OCI-LY7 (cell line): ENCODE measurements at regions of chr6 and their contacts with region 1.

Region 1: GRCh38 chr6:47357827-47358226 is 48.1 kb upstream of the TNFRSF21 start:
- DNase-seq: peak; percentile 59
- H3K4me3 ChIP-seq: peak overlapping the region; percentile 7
- H3K27ac ChIP-seq: peak overlapping the region; percentile 98
- H3K4me1 ChIP-seq: peaks cover 78% of the 10 kb centered on the region
- CTCF ChIP-seq: no peak

Region 2: GRCh38 chr6:46637145-46637544 is 720.7 kb before region 1 on chr6:
- CTCF ChIA-PET with region 1: no interaction called
- POLR2A ChIA-PET with region 1: no interaction called
- intact Hi-C with region 1: loop called (anchors 10 kb)
- DNase-seq: peak; percentile 78
- H3K4me3 ChIP-seq: peak overlapping the region; percentile 66
- H3K27ac ChIP-seq: peak overlapping the region; percentile 97
- H3K4me1 ChIP-seq: peaks cover 98% of the 10 kb centered on the region
- CTCF ChIP-seq: no peak

Region 3: DNA sequence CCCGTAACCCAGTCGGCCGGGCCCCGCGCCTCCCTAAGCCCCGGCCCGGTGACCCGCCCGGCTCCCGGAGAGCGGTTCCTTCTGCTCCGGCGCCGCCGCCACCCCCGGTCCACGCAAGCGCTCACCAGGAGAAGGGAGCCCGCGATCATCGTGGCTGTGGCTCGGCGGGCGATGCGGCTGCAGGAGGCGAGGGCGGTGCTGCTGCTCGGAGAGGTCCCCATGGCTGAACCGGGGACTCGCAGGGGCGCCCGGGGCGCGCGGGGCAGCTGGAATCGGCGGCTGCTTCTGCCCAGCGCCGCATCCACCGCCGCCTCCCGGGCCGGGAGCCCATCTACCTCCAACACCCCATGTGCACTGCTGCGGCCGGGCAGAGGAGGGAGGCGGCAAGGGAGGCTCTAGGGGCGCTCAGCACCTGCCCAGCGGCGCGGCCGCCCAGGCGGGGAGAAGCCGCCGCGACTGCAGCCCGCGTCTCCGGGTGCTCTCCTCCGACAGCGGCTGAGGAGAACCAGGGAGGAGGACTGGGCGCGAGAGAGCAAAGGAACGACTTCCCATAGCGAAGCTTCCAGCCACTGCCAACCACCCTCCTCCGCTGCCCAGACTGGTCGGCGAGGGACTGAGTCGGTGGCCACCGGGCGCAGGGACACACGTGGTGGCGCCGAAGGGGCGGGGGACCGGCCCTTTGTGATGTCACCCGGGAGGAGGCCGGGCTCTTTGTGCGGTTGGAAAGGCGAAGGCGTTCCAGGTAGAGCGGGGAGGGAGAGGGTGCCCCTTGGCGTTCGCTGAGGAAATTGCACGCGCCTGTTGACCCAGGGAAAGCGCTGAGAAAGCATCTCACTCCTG is 48.3 kb before region 1 on chr6 and contains the start of gene TNFRSF21:
- CTCF ChIA-PET with region 1: no interaction called
- POLR2A ChIA-PET with region 1: interaction called, 6 read pairs
- intact Hi-C with region 1: loop called (anchors 1 kb)
- DNase-seq: peak; percentile 93
- H3K4me3 ChIP-seq: peak within 1 kb of the TSS; percentile 95
- H3K27ac ChIP-seq: peak within 1 kb of the TSS; percentile 62
- H3K4me1 ChIP-seq: peaks cover 46% of the 10 kb centered on the region
- CTCF ChIP-seq: peak; percentile 86
- total RNA-seq, gene TNFRSF21: 22.7 and 28.1 TPM in 2 replicates

Region 4: GRCh38 chr6:47344022-47344421 is 13.8 kb before region 1 on chr6:
- CTCF ChIA-PET with region 1: interaction called, 5 read pairs
- POLR2A ChIA-PET with region 1: interaction called, 18 read pairs
- intact Hi-C with region 1: no loop called
- DNase-seq: no peak
- H3K4me3 ChIP-seq: no peak overlapping the region
- H3K27ac ChIP-seq: no peak overlapping the region
- H3K4me1 ChIP-seq: no peaks in the 10 kb centered on the region
- CTCF ChIP-seq: no peak

Region 5: DNA sequence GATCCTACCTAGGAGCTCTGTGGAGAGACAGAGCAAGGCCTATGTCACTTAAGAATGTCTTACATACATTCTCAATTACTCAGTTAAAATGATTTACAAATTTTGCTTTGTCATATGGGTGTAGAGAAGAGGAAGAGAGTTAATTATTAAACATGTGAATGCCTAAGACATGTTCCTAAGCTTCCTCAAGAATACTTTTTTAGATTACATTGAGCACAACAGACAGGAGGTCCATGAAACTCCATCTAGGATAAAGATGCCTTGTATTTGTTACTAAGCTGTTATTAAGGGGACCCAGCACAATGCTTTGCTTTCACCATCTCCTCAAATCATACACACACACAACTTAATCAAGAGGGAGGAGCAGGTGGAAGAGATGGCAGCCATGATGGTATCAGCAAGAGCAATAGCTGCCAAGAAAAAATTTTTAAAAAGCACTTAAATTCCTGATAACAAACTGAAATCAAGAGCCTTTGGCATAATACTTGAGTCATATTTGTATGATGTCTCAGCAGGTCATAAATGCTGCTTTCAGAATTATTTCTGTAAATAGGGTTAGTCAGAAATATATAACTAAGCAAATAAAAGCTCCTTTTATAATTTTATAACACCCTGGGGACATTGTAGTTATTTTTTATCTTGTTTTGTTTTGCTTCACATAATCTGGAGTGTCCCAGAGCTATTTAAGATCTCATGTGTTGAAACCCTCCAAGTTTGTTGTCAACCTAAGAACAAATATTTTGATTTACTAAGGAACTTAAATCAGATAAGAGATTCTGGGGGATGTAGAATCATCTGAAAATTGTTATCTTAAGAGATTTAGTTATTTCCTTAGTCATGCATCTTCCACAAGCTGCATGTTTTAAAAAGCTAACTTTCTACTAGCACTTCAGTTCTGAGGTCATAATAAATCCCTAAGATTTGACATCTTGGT is 49.8 kb after region 1 on chr6:
- CTCF ChIA-PET with region 1: no interaction called
- POLR2A ChIA-PET with region 1: interaction called, 12 read pairs
- intact Hi-C with region 1: loop called (anchors 2 kb)
- DNase-seq: no peak
- H3K4me3 ChIP-seq: no peak overlapping the region
- H3K27ac ChIP-seq: no peak overlapping the region
- H3K4me1 ChIP-seq: peaks cover 26% of the 10 kb centered on the region
- CTCF ChIP-seq: no peak

Region 6: GRCh38 chr6:47440719-47441118 is 82.9 kb after region 1 on chr6:
- CTCF ChIA-PET with region 1: no interaction called
- POLR2A ChIA-PET with region 1: no interaction called
- intact Hi-C with region 1: loop called (anchors 1 kb)
- DNase-seq: peak; percentile 72
- H3K4me3 ChIP-seq: peak overlapping the region; percentile 34
- H3K27ac ChIP-seq: peak overlapping the region; percentile 33
- H3K4me1 ChIP-seq: peaks cover 55% of the 10 kb centered on the region
- CTCF ChIP-seq: no peak